Right ventricle myocardium inferior (tissue), 1 donor: ENCODE measurements at regions of chr13 and their contacts with region 1.

Region 1: GRCh38 chr13:77779552-77780272 is 82.2 kb downstream of the SLAIN1 start:
- DNase-seq: no peak
- ATAC-seq: peak; percentile 66

Region 2: DNA sequence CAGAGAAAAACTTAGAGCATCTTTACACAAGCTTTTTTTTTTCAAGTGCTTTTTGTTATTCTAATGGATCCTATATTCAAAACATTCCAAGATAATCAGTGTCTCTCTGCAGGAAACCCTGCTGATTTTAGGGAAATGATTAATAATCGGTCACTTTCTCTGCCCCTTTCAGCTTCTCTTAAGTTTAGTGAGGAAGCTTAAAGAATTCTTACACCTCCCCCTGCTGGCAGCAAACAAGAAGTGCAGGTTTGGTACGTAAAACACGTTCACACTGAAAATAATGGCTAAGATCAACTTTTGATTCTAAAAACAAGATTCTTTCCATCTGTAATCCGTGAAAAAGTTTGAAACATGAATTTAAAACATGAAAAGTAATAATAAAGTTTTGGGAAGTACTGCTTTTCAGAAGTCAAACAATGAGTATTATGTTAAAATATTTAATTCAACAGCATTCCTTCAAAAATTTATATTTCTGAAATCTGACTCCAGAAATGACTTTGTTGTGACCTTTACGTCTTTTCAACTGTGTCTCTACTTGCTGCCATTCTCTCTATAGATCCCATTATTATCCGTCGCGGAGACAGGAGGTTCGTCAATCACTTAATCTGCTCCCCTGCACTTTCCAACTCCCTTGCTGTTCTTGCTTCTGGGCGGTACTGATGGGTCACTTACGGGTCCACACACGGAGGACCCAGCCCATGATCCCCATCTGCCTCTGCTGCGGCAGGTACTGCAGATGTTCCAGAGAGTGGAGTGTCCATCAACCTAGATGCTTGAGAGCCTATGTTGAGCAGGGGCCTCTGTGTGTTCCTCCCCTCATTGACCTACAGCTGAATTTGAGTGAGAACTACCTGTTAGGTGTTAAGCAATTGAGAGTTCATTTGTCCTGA is 342.0 kb after region 1 on chr13:
- intact Hi-C with region 1: loop called (anchors 1 kb)
- DNase-seq: no peak
- ATAC-seq: no peak